A673 (cell line): ENCODE measurements at regions of chr12 and their contacts with region 1.

Region 1: GRCh38 chr12:64065881-64066451 is 156.1 kb downstream of the KICS2 start:
- DNase-seq: no peak
- H3K4me3 ChIP-seq: no peak overlapping the region
- H3K27ac ChIP-seq: no peak overlapping the region
- H3K4me1 ChIP-seq: no peaks in the 10 kb centered on the region
- H3K27me3 ChIP-seq: no peaks in the 10 kb centered on the region
- CTCF ChIP-seq: no peak

Region 2: GRCh38 chr12:63849106-63849620 is 216.8 kb before region 1 on chr12:
- CTCF ChIA-PET with region 1: no interaction called
- POLR2A ChIA-PET with region 1: no interaction called
- intact Hi-C with region 1: no loop called
- DNase-seq: no peak
- H3K4me3 ChIP-seq: no peak overlapping the region
- H3K27ac ChIP-seq: no peak overlapping the region
- H3K4me1 ChIP-seq: peaks cover 11% of the 10 kb centered on the region
- H3K27me3 ChIP-seq: no peaks in the 10 kb centered on the region
- CTCF ChIP-seq: no peak

Region 3: GRCh38 chr12:64451687-64452558 is 386.0 kb after region 1 on chr12 and contains the start of gene TBK1:
- CTCF ChIA-PET with region 1: no interaction called
- POLR2A ChIA-PET with region 1: interaction called, 25 read pairs
- intact Hi-C with region 1: no loop called
- DNase-seq: peak; percentile 74
- H3K4me3 ChIP-seq: peak within 1 kb of the TSS; percentile 90
- H3K27ac ChIP-seq: peak within 1 kb of the TSS; percentile 87
- H3K4me1 ChIP-seq: peaks cover 11% of the 10 kb centered on the region
- H3K27me3 ChIP-seq: no peaks in the 10 kb centered on the region
- CTCF ChIP-seq: no peak
- total RNA-seq, gene TBK1: 30.2 and 33.8 TPM in 2 replicates